Cardiac septum (tissue), 1 donor: ENCODE measurements at regions of chr2 and their contacts with region 1.

Region 1: GRCh38 chr2:176088048-176088936 is 4.2 kb upstream of the HOXD13 start:
- DNase-seq: peak; percentile 79

Region 2: DNA sequence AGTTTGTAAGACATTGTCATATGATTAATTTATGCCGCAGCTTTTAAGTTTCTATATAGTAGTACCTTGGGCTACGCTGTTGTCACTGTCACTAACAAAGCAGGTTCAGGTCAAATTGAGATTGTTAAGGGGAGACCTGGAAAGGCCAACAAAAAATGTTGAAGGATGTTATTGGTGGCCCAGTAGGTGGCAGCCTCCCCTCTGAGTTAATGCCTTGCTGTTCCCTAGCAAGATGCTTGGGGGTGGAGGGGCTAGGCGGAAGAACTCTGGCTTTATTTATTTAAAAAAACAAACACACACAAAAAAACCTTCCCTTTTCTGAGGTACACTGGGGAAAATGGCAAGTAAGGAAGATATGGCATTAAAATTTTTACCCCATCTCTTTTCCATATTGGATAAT is 778.5 kb before region 1 on chr2:
- intact Hi-C with region 1: loop called (anchors 5 kb)
- DNase-seq: no peak

Region 3: GRCh38 chr2:175366815-175367214 is 721.5 kb before region 1 on chr2:
- intact Hi-C with region 1: loop called (anchors 5 kb)
- DNase-seq: no peak

Region 4: GRCh38 chr2:175414882-175415487 is 673.3 kb before region 1 on chr2:
- intact Hi-C with region 1: loop called (anchors 2 kb)
- DNase-seq: no peak

Region 5: GRCh38 chr2:175684457-175684856 is 403.8 kb before region 1 on chr2:
- intact Hi-C with region 1: loop called (anchors 5 kb)
- DNase-seq: no peak

Region 6: DNA sequence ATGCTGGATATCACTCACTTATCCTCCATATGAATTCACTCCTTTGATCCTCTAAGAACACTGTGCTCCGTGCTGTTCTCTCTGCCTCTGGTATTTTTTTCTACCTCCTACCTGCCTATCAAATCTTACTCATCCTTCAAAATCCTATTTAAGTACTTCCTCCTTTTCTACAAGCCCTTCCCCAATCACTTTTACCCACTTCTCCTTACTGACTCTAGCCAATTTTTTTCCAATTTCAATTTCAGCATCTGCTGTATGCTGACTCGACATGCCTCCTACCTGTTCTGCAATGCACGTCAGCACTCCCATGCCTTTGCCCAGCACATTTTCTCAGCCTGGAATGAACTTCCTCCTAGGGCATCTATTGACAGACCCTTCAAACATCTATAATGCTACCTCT is 48.9 kb before region 1 on chr2:
- intact Hi-C with region 1: no loop called
- DNase-seq: no peak

Region 7: GRCh38 chr2:176161819-176162626 is 73.7 kb after region 1 on chr2:
- intact Hi-C with region 1: no loop called
- DNase-seq: no peak